Mammary epithelial cell (primary cell): ENCODE measurements at regions of chr2 and their contacts with region 1.

Region 1: DNA sequence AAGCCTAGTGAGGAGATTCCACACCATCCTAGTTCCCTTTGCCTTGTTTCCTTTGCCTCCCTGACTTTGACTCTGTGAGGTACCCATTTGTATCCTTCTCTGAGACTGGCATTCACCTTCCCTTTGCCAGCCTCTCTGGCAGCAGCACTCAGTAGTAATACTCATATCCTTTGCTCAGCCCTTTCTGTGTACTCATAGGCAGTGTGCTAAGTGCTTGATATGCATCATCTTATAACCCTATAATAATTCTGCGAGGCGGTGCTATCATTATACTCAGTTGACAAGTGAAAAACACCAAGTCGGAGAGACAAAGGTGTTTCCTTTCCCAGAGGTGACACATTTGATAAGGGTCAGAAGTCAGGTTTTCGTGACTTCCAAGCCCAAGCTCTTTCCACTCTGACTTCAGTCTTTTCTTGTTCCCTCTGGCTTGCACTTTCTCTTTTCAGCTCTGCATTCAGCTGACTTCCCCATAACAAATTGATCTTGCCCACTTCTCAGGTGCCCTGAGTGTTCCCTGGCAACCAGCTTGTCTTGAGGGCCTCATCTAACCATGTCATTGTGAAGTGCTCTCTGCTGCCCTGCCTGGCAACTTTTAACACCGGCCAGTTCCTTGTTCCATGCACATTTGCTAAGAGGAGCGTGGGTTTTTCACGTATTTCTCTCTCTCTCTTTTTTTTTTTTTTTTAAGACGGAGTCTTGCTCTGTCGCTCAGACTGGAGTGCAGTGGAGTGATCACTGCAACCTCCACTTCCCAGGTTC is 94.5 kb upstream of the UPP2 start:
- DNase-seq: no peak
- H3K4me3 ChIP-seq: no peak overlapping the region
- H3K27ac ChIP-seq: no peak overlapping the region
- H3K4me1 ChIP-seq: peaks cover 18% of the 10 kb centered on the region
- H3K27me3 ChIP-seq: no peaks in the 10 kb centered on the region
- CTCF ChIP-seq: no peak

Region 2: GRCh38 chr2:157302492-157303099 is 704.5 kb before region 1 on chr2:
- CTCF ChIA-PET with region 1: no interaction called
- dilution Hi-C with region 1: no loop called
- in situ Hi-C with region 1: no loop called
- intact Hi-C with region 1: loop called (anchors 1 kb)
- DNase-seq: peak; percentile 32
- H3K4me3 ChIP-seq: no peak overlapping the region
- H3K27ac ChIP-seq: no peak overlapping the region
- H3K4me1 ChIP-seq: no peaks in the 10 kb centered on the region
- H3K27me3 ChIP-seq: no peaks in the 10 kb centered on the region
- CTCF ChIP-seq: peak; percentile 69 to 74

Region 3: GRCh38 chr2:157492189-157492773 is 514.9 kb before region 1 on chr2:
- CTCF ChIA-PET with region 1: no interaction called
- dilution Hi-C with region 1: no loop called
- in situ Hi-C with region 1: loop called (anchors 10 to 25 kb)
- intact Hi-C with region 1: loop called (anchors 1 kb)
- DNase-seq: peak; percentile 48
- H3K4me3 ChIP-seq: no peak overlapping the region
- H3K27ac ChIP-seq: no peak overlapping the region
- H3K4me1 ChIP-seq: no peaks in the 10 kb centered on the region
- H3K27me3 ChIP-seq: no peaks in the 10 kb centered on the region
- CTCF ChIP-seq: peak; percentile 78 to 82

Region 4: DNA sequence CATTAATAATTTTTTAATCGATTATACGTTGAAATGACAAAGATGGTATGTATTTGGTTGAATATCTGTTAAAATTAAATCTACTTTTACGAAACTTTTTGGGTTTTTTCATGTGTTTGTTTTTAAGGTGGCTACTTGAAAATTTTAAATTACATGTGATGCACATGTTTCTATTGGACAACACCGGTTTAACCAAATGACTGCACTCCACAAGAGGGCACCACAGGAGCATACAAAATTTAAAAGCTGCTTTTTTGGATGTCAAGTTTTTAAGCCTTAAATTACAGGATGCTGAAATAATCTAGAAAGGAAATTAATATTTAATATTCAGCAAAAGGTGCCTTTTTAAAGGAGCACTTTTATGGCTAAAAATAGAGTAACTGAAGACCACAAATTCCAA is 229.7 kb before region 1 on chr2:
- CTCF ChIA-PET with region 1: interaction called, 3 read pairs
- dilution Hi-C with region 1: loop called (anchors 25 kb)
- in situ Hi-C with region 1: loop called in 1 of 2 experiments (anchors 10 kb)
- intact Hi-C with region 1: loop called (anchors 1 kb)
- DNase-seq: peak; percentile 28
- H3K4me3 ChIP-seq: no peak overlapping the region
- H3K27ac ChIP-seq: no peak overlapping the region
- H3K4me1 ChIP-seq: no peaks in the 10 kb centered on the region
- H3K27me3 ChIP-seq: no peaks in the 10 kb centered on the region
- CTCF ChIP-seq: peak; percentile 60 to 66

Region 5: DNA sequence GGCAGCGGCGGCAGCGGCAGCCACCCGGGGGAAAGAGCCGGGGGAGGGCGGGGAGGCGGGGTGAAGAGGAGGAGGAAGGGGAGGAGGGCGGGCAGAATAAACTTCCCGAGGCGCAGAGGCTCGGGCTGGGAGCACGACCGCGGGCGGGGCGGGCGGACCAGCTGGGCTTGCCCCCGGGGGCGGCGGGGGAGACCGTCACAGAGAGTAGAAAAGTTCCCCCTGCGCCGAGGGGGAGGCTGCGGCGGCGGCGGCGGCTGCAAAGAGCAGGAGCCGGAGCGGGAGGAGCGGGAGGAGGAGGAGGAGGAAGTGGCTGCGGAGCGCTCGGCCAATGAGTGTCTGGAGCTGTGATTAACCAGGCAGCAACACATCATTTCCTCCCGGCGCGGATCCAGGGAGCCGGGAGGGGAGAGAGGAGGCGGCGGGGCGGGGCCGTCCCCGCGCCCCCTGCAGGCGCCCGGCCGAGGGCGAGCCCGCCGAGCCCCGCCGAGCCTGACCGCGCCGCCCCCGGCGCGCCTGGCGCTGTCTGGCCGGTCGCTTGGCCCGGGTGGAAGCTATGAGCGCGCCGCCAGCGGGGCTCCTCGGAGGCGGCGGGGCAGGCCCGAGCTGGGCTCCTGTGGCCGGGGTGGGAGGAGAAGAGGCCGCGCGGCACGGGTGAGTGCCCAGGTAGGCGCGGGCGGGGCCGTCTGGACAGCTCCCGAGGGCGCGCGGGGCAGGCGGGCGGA is 130.9 kb before region 1 on chr2 and contains the start of gene ACVR1:
- CTCF ChIA-PET with region 1: no interaction called
- dilution Hi-C with region 1: no loop called
- in situ Hi-C with region 1: no loop called
- intact Hi-C with region 1: loop called (anchors 2 kb)
- DNase-seq: peak; percentile 96
- H3K4me3 ChIP-seq: peak within 1 kb of the TSS; percentile 76 to 92 (median 82)
- H3K27ac ChIP-seq: peak within 1 kb of the TSS; percentile 70
- H3K4me1 ChIP-seq: peaks cover 38% of the 10 kb centered on the region
- H3K27me3 ChIP-seq: no peaks in the 10 kb centered on the region
- CTCF ChIP-seq: peak; percentile 10 to 23
- total RNA-seq, gene ACVR1: 35.1 to 41.2 TPM